K562 (cell line): ENCODE measurements at regions of chr4 and their contacts with region 1.

Region 1: GRCh38 chr4:70901984-70902576 is at the start of gene MOB1B:
- DNase-seq: peak; percentile 88 to 94 (median 92)
- ATAC-seq: peak; percentile 90
- H3K4me3 ChIP-seq: peak within 1 kb of the TSS; percentile 82
- H3K27ac ChIP-seq: peak within 1 kb of the TSS; percentile 94
- H3K4me1 ChIP-seq: peaks cover 25 to 26% of the 10 kb centered on the region in 2 experiments; a peak in 4 of 5 replicates
- H3K27me3 ChIP-seq: no peaks in the 10 kb centered on the region
- CTCF ChIP-seq: peak; percentile 41 to 54 (median 50); a peak in 4 of 6 replicates
- EP300 ChIP-seq: no peak; the same call in 1 of the 2 replicates
- POLR2A ChIP-seq: peak; percentile 87
- RAD21 ChIP-seq: peak in 1 of 2 experiments; percentile 22; a peak in 2 of 4 replicates
- polyA plus RNA-seq, gene MOB1B: 8.4 to 9.3 TPM

Region 2: GRCh38 chr4:70839589-70840093 is 62.4 kb before region 1 on chr4 and contains the start of gene GRSF1:
- CTCF ChIA-PET with region 1: interaction called, 5 read pairs
- POLR2A ChIA-PET with region 1: no interaction called
- in situ Hi-C with region 1: no loop called
- intact Hi-C with region 1: loop called (anchors 1 kb)
- DNase-seq: peak; percentile 91 to 94 (median 93)
- ATAC-seq: peak; percentile 90
- H3K4me3 ChIP-seq: peak within 1 kb of the TSS; percentile 89
- H3K27ac ChIP-seq: peak within 1 kb of the TSS; percentile 95
- H3K4me1 ChIP-seq: peaks cover 15 to 18% of the 10 kb centered on the region in 2 experiments
- H3K27me3 ChIP-seq: no peaks in the 10 kb centered on the region
- CTCF ChIP-seq: peak in 2 of 3 experiments; percentile 32 to 57; a peak in 4 of 6 replicates
- EP300 ChIP-seq: no peak
- POLR2A ChIP-seq: peak; percentile 85
- RAD21 ChIP-seq: peak; percentile 32 to 49
- polyA plus RNA-seq, gene GRSF1: 33.0 to 36.8 TPM

Region 3: GRCh38 chr4:70936200-70936787 is 34.2 kb after region 1 on chr4:
- CTCF ChIA-PET with region 1: no interaction called
- POLR2A ChIA-PET with region 1: no interaction called
- in situ Hi-C with region 1: no loop called
- intact Hi-C with region 1: loop called (anchors 5 kb)
- DNase-seq: no peak
- ATAC-seq: no peak
- H3K4me3 ChIP-seq: no peak overlapping the region
- H3K27ac ChIP-seq: no peak overlapping the region
- H3K4me1 ChIP-seq: peaks cover 13 to 22% of the 10 kb centered on the region in 2 experiments; a peak in 4 of 5 replicates
- H3K27me3 ChIP-seq: no peaks in the 10 kb centered on the region
- CTCF ChIP-seq: no peak
- EP300 ChIP-seq: no peak
- POLR2A ChIP-seq: no peak
- RAD21 ChIP-seq: no peak

Region 4: GRCh38 chr4:70993181-70994068 is 91.3 kb after region 1 on chr4 and contains the start of gene DCK:
- CTCF ChIA-PET with region 1: no interaction called
- POLR2A ChIA-PET with region 1: interaction called, 3 read pairs
- in situ Hi-C with region 1: no loop called
- intact Hi-C with region 1: loop called (anchors 1 kb)
- DNase-seq: peak; percentile 92 to 96 (median 93)
- ATAC-seq: peak; percentile 91
- H3K4me3 ChIP-seq: peak within 1 kb of the TSS; percentile 82
- H3K27ac ChIP-seq: peak within 1 kb of the TSS; percentile 85
- H3K4me1 ChIP-seq: peaks cover 15 to 19% of the 10 kb centered on the region in 2 experiments; a peak in 4 of 5 replicates
- H3K27me3 ChIP-seq: no peaks in the 10 kb centered on the region
- CTCF ChIP-seq: peak in 1 of 3 experiments; percentile 2; a peak in 1 of 6 replicates
- EP300 ChIP-seq: no peak
- POLR2A ChIP-seq: peak; percentile 87
- RAD21 ChIP-seq: no peak
- polyA plus RNA-seq, gene DCK: 19.6 to 21.2 TPM

Region 5: DNA sequence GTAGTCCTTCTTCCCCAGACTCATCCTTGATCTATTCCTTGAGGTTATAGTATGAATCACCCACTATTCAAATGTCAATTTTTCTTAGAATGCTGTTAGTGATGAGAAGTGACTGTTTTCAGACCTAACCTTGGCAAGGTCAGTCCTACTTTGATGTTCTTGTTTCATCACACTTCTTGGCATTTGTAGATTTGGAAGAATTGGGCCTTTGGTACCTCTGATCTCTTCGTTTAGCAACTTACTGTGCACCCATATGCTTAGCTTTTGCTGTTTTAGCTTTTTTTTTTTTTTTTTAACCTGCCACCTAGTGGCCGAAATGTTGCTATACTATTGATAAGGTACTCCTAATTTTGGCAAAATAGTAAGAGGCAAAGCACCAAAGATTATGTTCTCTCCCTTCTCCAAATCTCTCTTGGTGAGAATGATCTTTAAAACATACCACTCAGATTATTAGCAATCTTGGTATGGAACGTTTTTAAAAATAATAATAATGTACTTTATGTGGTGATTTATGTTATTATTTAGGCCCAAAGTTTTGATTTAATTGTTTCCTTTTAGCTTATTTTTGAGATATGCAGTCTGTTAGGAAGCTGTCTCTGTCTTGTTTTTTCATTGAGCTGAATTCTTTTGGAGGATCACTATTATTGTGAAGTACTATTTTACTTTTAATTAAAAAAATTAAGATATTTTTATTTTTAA is 108.0 kb after region 1 on chr4:
- CTCF ChIA-PET with region 1: no interaction called
- POLR2A ChIA-PET with region 1: no interaction called
- in situ Hi-C with region 1: no loop called
- intact Hi-C with region 1: loop called (anchors 5 kb)
- DNase-seq: peak; percentile 46 to 62 (median 52)
- ATAC-seq: peak; percentile 91
- H3K4me3 ChIP-seq: no peak overlapping the region
- H3K27ac ChIP-seq: no peak overlapping the region
- H3K4me1 ChIP-seq: peaks cover 0 to 4% of the 10 kb centered on the region in 2 experiments; a peak in 1 of 5 replicates
- H3K27me3 ChIP-seq: no peaks in the 10 kb centered on the region
- CTCF ChIP-seq: peak; percentile 37 to 71 (median 66); a peak in 5 of 6 replicates
- EP300 ChIP-seq: no peak
- POLR2A ChIP-seq: no peak
- RAD21 ChIP-seq: peak; percentile 30 to 45

Region 6: DNA sequence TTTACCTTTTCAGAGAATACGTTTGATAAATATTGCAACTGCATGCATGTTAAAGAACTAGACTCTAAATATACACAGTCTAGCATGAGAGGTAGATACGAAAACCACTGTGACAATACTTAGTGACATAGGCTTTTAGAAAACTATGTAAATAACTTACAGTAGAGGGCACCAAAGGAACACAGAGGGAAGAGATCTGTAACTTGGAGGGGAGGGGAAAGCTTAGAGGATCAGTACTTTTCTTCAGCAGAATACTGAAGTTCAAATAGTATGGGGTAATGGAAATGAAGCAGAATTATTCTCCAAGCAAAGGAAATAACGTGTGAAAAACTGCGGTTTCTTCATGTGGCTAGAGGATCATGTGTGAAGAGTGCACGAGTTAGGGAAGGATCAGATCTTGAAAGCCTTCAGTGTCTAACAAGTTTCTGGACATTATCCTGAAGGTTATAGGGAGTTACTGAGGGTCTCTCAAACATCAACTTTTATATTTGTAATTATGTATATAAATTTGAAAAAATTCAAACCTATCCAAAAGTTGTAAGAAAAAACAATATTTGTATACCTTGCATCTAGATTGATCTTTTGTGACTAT is 1394.0 kb after region 1 on chr4:
- CTCF ChIA-PET with region 1: no interaction called
- POLR2A ChIA-PET with region 1: no interaction called
- in situ Hi-C with region 1: loop called (anchors 25 kb)
- intact Hi-C with region 1: no loop called
- DNase-seq: peak; percentile 34 to 46 (median 40)
- ATAC-seq: peak; percentile 93
- H3K4me3 ChIP-seq: no peak overlapping the region
- H3K27ac ChIP-seq: no peak overlapping the region
- H3K4me1 ChIP-seq: no peaks in the 10 kb centered on the region
- H3K27me3 ChIP-seq: no peaks in the 10 kb centered on the region
- CTCF ChIP-seq: peak; percentile 42 to 69 (median 55); a peak in 5 of 6 replicates
- EP300 ChIP-seq: no peak
- POLR2A ChIP-seq: no peak
- RAD21 ChIP-seq: peak; percentile 66 to 70